ENCODE measurements at regions of chr15 and their contacts with region 1.

Region 1: GRCh38 chr15:80379693-80380092 is 24.5 kb upstream of the ARNT2 start:
- DNase-seq: no peak

Region 2: DNA sequence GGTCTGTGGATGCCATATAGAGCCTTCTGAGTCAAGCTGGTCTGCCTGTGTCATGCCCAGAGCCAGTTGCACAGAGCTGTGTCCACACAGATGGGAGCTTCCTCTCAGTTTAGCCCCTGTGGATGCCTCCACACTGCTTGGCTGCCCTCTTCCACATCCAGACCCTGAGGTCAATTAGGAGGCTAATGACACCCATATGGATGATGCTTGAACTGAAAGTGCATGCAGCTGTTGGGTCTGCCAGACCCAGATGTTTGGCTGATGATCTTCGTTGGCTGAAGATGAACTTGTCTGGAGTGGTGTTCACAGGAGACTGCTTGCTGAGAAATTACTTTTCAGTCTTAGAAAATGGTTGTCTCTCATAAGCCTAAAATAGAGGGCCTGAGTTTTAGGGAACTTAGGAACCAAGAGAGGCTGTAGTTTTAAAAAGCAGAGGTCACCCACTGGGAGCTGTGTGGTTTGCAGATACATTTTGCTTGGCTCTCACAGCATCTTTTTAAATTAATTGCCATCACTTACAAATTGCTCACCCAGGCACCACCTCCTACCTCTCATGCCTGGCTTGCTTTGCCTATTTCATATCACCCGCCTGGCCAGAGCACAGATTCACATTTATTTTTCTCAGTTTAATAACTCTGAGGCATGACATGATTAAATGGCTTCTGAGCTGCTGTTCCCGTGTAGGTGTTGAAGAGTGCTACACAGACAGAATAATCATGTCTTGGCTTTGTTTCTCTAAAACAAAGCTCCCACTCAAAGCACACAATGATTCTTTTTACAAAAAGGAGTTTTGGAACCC is 771.4 kb before region 1 on chr15:
- intact Hi-C with region 1: no loop called
- DNase-seq: no peak

Region 3: DNA sequence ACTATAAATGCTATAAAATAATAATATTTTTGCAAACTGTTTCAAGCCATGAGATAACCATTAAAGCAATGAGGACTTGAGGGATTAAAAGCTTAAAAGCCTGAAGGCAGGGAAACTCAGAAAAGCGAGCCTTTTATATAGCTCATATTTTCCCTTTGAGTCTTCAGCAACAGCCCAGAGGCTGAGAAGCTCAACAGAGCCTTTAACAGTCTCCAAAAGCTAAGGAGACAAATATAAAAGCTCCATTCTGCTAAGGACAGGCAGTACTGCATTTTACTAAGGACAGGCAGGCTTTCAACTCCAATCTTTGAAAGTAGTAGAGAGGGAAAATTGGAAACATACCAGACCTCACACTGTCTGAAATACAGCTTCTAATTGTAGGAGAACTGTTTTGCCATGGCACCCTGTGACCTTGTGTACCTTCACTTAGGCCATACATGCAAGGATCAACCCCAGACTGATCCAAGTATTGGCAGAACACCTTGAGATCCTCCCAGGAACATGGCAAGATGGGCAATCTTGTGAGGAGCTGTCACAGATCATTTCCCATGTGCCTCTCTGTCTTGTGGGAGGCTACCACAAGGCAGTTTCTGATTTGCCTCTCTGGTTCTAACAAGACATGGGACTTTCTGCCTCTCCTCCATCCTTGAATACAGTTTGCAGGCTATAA is 28.6 kb before region 1 on chr15:
- intact Hi-C with region 1: loop called in 1 of 2 experiments (anchors 1 kb)
- DNase-seq: no peak

Region 4: DNA sequence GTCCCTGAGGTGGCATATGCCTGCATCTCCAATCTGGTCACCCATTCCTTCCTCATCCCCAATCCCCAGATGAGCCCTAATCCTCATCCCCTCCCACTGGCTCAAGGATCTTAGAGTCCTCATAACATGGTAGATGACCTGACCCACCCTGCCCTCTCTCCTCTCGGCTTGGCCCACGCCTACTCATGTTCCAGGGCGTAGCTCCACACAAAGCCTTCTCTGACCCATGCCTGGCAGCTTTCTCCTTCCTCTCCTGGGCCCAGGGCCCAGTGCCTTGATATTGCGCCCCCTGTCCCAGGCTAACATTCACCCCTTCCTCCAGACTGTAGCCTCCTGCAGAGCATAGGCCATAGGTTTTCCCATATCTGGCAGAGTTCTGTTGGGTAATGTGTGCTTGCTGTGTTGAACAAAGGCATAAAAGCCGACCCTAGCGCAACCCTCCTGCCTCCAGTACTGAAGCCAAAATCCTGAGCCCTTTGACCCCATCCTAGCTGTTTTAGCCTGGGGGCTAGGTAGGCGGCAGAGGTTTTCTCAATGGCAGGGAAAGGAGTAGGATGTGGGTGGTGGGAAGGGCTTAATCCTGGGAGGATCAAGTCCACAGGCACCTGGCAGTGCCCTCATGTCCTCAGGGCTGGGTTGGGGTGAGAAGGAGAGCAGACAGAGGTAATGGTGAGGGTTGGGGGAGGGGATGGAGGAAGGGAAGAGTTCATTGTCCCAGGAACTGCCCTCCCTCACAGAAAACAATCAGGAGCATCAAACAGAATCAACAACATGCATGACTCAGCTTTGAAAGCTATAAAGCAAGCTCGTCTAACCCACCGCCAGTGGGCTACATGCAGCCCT is 574.5 kb after region 1 on chr15:
- intact Hi-C with region 1: no loop called
- DNase-seq: peak; percentile 49

Measured in posterior vena cava (tissue), 2 donors.